ENCODE measurements at regions of chr11 and their contacts with region 1.

Region 1: DNA sequence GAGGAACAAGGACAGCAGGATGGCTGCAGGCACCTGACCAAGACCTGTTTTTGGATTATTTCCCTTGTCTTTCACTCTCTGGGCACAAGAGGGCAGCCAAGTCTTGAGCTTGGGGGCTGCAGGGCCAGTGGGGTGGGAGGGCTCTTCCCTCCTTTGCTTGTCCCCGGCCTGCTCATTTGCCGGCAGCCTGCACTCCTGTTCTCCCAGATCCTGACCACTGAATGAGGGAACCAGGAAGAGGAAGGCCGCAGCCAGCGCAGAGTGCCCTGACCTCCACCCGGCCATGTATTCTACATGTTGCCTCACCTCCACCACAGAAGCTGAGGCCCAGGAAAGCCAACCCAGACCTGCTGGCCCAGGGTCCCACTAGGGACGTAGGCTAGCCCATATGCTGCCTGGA is 15.5 kb upstream of the NNMT start:
- DNase-seq: peak; percentile 84 to 86
- ATAC-seq: peak; percentile 87
- H3K4me3 ChIP-seq: no peak overlapping the region
- H3K27ac ChIP-seq: peak overlapping the region in 1 of 2 donors; percentile 7
- H3K4me1 ChIP-seq: peaks cover 0 to 2% of the 10 kb centered on the region in 2 donors
- H3K27me3 ChIP-seq: no peaks in the 10 kb centered on the region

Region 2: DNA sequence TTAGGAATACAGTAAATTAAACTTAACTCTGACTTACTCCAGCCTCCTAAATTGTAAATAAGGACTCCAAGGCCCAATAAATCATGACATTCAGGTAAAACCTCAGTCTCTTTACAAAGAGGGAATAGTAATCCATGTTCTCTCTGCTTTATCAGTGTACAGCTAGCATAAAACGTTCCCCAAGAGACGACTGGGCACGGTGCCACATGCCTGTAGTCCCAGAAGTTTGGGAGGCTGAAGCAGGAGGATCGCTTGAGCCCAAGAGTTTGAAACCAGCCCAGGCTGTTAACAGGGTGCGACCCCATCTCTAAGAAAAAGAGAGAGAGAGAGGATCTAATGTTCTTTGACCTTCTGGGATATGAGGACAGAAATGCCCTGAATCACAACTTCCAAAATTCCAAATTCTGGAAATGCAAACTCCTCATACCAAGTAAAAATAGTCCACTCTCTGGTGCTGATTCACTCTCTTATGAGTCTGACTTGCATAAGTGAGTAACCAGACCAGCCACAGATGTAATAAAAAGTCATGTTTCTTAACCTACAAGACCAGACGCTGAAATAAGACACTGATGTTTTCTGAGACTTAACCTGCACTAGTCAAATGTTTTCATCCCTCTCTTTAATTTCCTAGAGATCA is 41.0 kb after region 1 on chr11:
- intact Hi-C with region 1: loop called (anchors 5 kb)
- DNase-seq: peak; percentile 68 to 90
- ATAC-seq: peak; percentile 64
- H3K4me3 ChIP-seq: no peak overlapping the region
- H3K27ac ChIP-seq: peak overlapping the region; percentile 49 to 79
- H3K4me1 ChIP-seq: peaks cover 3 to 19% of the 10 kb centered on the region in 2 donors
- H3K27me3 ChIP-seq: no peaks in the 10 kb centered on the region

Region 3: DNA sequence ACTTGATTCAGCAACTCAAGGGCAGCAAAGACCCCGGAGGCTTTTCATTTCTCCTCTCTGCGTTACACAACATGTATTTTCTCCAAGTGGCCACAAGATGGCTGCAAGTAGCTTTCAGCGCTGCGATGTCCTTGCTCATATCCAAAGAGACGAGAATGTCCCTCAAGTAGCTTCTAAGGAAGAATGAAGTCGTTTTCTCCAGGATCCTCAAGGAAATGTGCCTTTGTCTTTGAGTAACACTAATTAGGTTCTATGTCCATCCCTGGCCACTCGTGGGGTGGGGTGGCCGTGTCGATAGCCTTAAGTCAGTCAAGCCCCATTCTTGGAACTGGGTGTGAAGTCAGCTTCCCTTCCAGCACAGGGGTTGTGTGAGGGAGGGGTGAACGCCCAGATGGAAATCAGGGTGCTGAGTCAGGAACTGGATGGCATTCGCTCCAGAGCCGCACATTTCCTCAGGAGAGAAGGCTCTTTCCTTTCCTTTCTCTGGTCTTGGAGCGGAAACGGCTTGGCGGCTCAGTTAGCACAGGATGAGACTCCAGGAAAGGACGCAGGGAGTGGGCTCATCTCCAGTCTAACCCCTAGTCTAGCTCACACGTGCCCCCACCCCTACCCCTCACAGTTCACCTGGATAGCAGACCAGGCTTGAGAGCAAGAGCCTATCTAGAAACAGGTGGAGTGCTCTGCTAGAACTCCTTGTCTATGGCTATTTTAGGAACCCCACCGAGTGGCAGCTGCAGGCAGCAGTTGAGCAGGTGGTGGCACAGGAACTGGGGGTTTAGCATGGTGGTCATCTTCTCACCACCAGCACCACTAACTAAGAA is 59.8 kb after region 1 on chr11:
- intact Hi-C with region 1: loop called in 1 of 2 experiments (anchors 5 kb)
- DNase-seq: peak; percentile 64 to 80
- ATAC-seq: peak; percentile 87
- H3K4me3 ChIP-seq: peak overlapping the region in 1 of 2 donors; percentile 69
- H3K27ac ChIP-seq: peak overlapping the region in 1 of 2 donors; percentile 34
- H3K4me1 ChIP-seq: no peaks in the 10 kb centered on the region
- H3K27me3 ChIP-seq: no peaks in the 10 kb centered on the region

Region 4: DNA sequence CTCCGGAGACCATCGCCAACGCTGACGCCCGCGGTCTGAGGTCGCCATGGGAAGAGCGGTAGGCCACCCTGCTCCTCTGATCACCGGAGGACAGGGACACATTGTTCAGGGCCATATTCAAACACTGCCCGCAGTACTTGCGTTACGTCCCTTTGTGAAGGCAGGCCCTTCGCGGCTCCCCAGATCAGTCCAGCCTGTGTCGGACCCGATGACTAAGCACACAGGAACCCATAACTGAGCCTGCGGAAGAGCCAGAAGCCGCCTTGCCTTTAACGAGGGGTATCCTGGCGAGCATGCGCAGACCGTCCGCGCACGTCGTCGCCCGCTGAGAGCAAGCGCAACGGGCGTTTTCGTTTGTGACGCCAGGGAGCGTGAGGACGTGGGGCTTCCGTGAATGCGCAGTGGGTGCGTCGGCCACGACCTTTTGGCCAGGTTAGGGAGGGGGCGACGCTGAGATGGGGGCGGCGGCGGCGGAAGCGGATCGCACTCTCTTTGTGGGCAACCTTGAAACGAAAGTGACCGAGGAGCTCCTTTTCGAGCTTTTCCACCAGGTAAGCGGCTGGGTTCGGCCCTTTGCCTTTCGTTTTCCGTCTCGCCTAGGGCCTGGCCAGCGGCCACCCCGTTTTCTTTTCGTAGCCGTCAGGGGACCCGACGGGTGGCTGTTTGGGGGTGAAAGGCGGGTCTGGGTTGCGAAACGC is 119.7 kb after region 1 on chr11 and contains the starts of genes C11orf71 and RBM7:
- intact Hi-C with region 1: loop called in 1 of 2 experiments (anchors 5 kb)
- DNase-seq: peak; percentile 99 to 100
- ATAC-seq: peak; percentile 98
- H3K4me3 ChIP-seq: peak within 1 kb of the TSS; percentile 82 to 84
- H3K27ac ChIP-seq: peak within 1 kb of the TSS; percentile 79 to 94
- H3K4me1 ChIP-seq: peaks cover 1 to 4% of the 10 kb centered on the region in 2 donors
- H3K27me3 ChIP-seq: no peaks in the 10 kb centered on the region
- total RNA-seq, gene C11orf71: 4.4 to 4.9 TPM
- total RNA-seq, gene RBM7: 37.1 to 37.9 TPM

Region 5: GRCh38 chr11:114439229-114440120 is 158.8 kb after region 1 on chr11 and contains the start of gene REXO2:
- intact Hi-C with region 1: loop called in 1 of 2 experiments (anchors 10 kb)
- DNase-seq: peak; percentile 97 to 99
- ATAC-seq: peak; percentile 98
- H3K4me3 ChIP-seq: peak within 1 kb of the TSS; percentile 36 to 79
- H3K27ac ChIP-seq: peak within 1 kb of the TSS in 1 of 2 donors; percentile 33
- H3K4me1 ChIP-seq: no peaks in the 10 kb centered on the region
- H3K27me3 ChIP-seq: no peaks in the 10 kb centered on the region
- total RNA-seq, gene REXO2: 103 to 109 TPM

Region 6: GRCh38 chr11:114762408-114762807 is 481.7 kb after region 1 on chr11:
- intact Hi-C with region 1: loop called in 1 of 2 experiments (anchors 2 kb)
- DNase-seq: peak; percentile 73 to 86
- ATAC-seq: peak; percentile 75
- H3K4me3 ChIP-seq: no peak overlapping the region
- H3K27ac ChIP-seq: no peak overlapping the region
- H3K4me1 ChIP-seq: no peaks in the 10 kb centered on the region
- H3K27me3 ChIP-seq: no peaks in the 10 kb centered on the region

Measured in aorta (tissue), 5 donors.